ENCODE measurements at regions of chr5 and their contacts with region 1.

Region 1: DNA sequence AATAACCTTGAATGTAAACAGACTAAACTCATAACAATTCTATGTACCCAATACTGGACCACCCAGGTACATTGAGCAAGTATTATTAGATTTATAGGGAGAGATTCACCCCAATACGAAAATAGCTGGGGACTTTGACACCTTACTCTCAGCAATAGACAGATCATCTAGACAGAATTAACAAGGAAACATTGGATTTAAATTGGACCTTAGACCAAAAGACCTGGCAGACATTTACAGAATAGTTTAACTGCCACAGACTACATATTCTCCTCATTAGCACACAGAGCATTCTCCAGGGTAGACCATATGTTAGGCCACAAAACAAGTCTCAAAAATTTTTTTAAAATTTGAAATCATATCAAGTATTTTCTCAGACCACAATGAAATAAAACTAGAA is 397.4 kb downstream of the PIK3R1 start:
- DNase-seq: no peak
- H3K4me3 ChIP-seq: no peak overlapping the region
- H3K27ac ChIP-seq: no peak overlapping the region
- H3K4me1 ChIP-seq: no peaks in the 10 kb centered on the region
- H3K27me3 ChIP-seq: no peaks in the 10 kb centered on the region
- CTCF ChIP-seq: no peak
- POLR2A ChIP-seq: no peak

Region 2: GRCh38 chr5:68628082-68628814 is 15.3 kb after region 1 on chr5:
- intact Hi-C with region 1: no loop called
- DNase-seq: no peak
- H3K4me3 ChIP-seq: no peak overlapping the region
- H3K27ac ChIP-seq: no peak overlapping the region
- H3K4me1 ChIP-seq: no peaks in the 10 kb centered on the region
- H3K27me3 ChIP-seq: no peaks in the 10 kb centered on the region
- CTCF ChIP-seq: no peak
- POLR2A ChIP-seq: no peak

Region 3: GRCh38 chr5:68673106-68673822 is 60.3 kb after region 1 on chr5:
- intact Hi-C with region 1: no loop called
- DNase-seq: no peak
- H3K4me3 ChIP-seq: peak overlapping the region in 2 of 3 donors; percentile 4 to 38
- H3K27ac ChIP-seq: peak overlapping the region; percentile 44 to 61
- H3K4me1 ChIP-seq: no peaks in the 10 kb centered on the region
- H3K27me3 ChIP-seq: no peaks in the 10 kb centered on the region
- CTCF ChIP-seq: no peak
- POLR2A ChIP-seq: no peak

Region 4: DNA sequence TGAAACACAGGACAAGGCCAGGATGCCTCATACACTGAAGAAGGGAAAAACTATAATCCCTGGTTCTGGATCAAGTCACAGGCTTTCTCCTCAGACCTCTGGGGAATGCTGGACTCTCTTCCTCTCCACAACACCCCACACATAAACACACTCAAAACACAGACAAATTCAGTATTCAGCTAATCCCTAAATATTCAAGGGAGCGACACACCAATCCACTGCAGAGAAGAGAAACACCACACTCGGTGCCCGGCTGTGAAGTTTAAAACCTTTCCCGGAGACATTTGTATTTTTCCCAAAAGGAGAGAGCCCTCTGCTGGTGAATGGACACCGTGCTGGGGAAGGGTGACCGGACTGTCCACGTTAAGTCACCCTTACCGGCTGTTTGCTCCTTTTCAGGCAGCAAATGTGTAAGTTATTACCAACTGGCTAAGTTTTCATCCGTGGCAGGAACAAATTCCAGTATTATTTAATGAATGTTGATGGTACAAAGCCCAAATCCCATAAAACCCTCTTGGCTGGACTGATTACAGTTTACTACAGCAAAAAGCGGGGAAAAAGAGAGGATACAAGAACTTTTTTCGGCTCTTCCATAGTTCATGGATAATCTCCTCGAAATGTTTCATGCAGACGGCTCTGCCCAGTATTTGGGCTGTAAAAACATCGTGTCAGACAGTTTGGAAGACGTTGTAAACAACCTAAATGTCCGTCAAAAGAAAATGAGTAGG is 349.9 kb after region 1 on chr5:
- intact Hi-C with region 1: loop called (anchors 10 kb)
- DNase-seq: peak; percentile 62 to 65
- H3K4me3 ChIP-seq: peak overlapping the region in 1 of 3 donors; percentile 44
- H3K27ac ChIP-seq: peak overlapping the region; percentile 12 to 76
- H3K4me1 ChIP-seq: no peaks in the 10 kb centered on the region
- H3K27me3 ChIP-seq: no peaks in the 10 kb centered on the region
- CTCF ChIP-seq: peak; percentile 60 to 89 (median 80)
- POLR2A ChIP-seq: no peak

Measured in breast epithelium (tissue), 4 donors.